ENCODE measurements at regions of chr4 and their contacts with region 1.

Region 1: DNA sequence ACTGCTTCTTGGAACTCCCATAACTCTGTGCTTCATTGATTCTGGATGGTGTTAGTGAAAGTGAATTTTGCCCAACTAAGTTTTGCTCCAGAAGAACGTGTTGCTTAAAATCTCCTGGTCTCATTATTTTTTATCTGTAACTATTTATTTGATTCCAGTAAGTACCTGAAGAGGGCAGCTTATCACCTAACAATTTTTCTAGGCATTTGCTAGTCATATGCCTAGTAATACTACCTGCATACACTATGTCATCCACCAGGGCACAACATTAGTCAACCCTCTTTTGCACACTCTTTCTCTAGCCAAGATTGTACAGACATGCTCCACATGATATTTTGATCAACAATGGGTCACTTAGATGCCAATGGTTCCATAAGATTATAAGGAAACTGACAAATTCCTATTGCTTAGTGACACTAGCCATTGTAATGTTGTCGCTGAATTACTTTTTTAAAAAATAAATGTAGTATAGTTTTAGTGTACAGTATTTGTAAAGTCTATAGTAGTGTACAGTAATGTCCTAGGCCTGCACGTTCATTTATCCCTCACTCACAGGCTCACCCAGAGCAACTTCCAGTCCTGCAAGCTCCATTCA is 499.9 kb upstream of the AADAT start:
- DNase-seq: peak; percentile 12
- H3K4me3 Mint-ChIP-seq: no peak overlapping the region
- H3K27ac Mint-ChIP-seq: no peak overlapping the region
- H3K4me1 Mint-ChIP-seq: peaks cover 3% of the 10 kb centered on the region
- H3K27me3 Mint-ChIP-seq: no peaks in the 10 kb centered on the region
- CTCF ChIP-seq: peak; percentile 45

Region 2: DNA sequence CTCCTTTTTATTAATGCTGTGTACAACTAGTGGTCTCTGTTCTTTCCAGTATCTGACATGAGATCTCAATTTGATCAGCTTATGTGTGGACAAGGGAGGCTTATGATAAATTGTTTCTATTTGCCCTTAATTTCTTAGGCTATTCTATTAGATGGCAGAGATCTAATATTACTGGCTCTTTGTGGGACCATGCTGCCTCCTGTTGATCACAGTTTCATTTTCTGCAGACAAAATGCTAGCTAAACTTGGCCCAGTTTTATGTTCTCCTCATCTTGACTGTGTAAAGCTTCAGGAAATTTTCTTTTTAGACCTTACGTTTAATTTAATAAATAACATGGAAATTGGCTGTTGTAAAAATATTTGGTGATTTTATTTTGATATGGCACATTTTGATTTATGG is 127.2 kb after region 1 on chr4:
- CTCF ChIA-PET with region 1: no interaction called
- intact Hi-C with region 1: loop called (anchors 1 kb)
- DNase-seq: no peak
- H3K4me3 Mint-ChIP-seq: no peak overlapping the region
- H3K27ac Mint-ChIP-seq: no peak overlapping the region
- H3K4me1 Mint-ChIP-seq: no peaks in the 10 kb centered on the region
- H3K27me3 Mint-ChIP-seq: no peaks in the 10 kb centered on the region
- CTCF ChIP-seq: no peak

Region 3: GRCh38 chr4:170794525-170794924 is 204.8 kb after region 1 on chr4:
- CTCF ChIA-PET with region 1: no interaction called
- intact Hi-C with region 1: loop called (anchors 1 kb)
- DNase-seq: no peak
- H3K4me3 Mint-ChIP-seq: no peak overlapping the region
- H3K27ac Mint-ChIP-seq: no peak overlapping the region
- H3K4me1 Mint-ChIP-seq: no peaks in the 10 kb centered on the region
- H3K27me3 Mint-ChIP-seq: no peaks in the 10 kb centered on the region
- CTCF ChIP-seq: no peak

Region 4: GRCh38 chr4:170853422-170854021 is 263.8 kb after region 1 on chr4:
- CTCF ChIA-PET with region 1: interaction called, 8 read pairs
- intact Hi-C with region 1: loop called (anchors 1 kb)
- DNase-seq: peak; percentile 67
- H3K4me3 Mint-ChIP-seq: no peak overlapping the region
- H3K27ac Mint-ChIP-seq: no peak overlapping the region
- H3K4me1 Mint-ChIP-seq: no peaks in the 10 kb centered on the region
- H3K27me3 Mint-ChIP-seq: no peaks in the 10 kb centered on the region
- CTCF ChIP-seq: peak; percentile 50

Region 5: DNA sequence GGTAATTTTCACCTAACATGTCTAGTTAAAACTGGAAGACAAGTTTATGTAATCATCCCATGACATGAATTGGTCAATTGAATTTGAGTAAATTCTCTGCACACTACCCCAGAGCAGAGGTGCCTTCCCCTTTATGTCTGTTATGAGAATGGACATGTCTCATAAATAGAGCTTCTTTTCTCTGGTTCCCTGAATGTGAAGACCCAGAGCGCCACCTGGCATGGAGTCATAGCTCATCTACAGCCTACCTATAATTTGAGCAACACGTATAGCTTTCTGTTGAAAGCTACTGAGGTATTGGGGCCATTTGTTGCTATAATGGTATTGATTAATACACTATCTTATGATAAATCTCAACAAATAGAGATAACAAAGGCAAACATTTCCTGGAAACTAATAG is 597.0 kb after region 1 on chr4:
- CTCF ChIA-PET with region 1: no interaction called
- intact Hi-C with region 1: loop called (anchors 5 kb)
- DNase-seq: peak; percentile 35
- H3K4me3 Mint-ChIP-seq: no peak overlapping the region
- H3K27ac Mint-ChIP-seq: no peak overlapping the region
- H3K4me1 Mint-ChIP-seq: no peaks in the 10 kb centered on the region
- H3K27me3 Mint-ChIP-seq: no peaks in the 10 kb centered on the region
- CTCF ChIP-seq: no peak

Region 6: DNA sequence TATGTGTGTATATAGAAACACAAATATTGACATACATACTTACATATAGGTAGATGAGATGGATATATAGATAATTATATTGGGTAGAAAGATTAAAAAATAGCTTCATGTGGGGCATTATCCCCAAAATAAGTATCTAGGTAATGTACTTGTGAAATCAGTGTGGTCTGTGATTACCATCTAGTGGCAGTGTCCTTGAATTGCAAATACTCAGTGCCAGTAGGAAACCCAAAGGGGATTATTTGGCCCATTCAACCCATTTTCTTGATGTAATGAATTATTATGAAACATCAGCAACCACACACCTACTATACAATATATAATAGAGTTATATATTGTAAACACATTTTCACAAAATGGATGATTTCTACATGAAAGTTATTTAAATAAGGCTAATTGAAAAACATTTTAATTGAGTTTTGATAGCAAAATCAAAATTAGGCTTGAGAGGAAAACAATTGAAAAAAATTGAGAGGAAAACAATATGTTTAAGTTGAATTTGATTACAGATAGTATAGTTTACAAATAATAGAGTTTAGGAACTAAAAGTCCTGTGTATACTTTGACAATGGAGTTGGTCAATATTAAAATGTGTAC is 1612.9 kb after region 1 on chr4:
- CTCF ChIA-PET with region 1: no interaction called
- intact Hi-C with region 1: loop called (anchors 5 kb)
- DNase-seq: peak; percentile 2
- H3K4me3 Mint-ChIP-seq: no peak overlapping the region
- H3K27ac Mint-ChIP-seq: no peak overlapping the region
- H3K4me1 Mint-ChIP-seq: no peaks in the 10 kb centered on the region
- H3K27me3 Mint-ChIP-seq: no peaks in the 10 kb centered on the region
- CTCF ChIP-seq: no peak